GM12878 (cell line): ENCODE measurements at regions of chr17 and their contacts with region 1.

Region 1: GRCh38 chr17:42388381-42389134 is at the start of gene STAT3:
- DNase-seq: peak; percentile 100
- ATAC-seq: peak; percentile 95
- H3K4me3 ChIP-seq: peak within 1 kb of the TSS; percentile 91
- H3K27ac ChIP-seq: peak within 1 kb of the TSS; percentile 97
- H3K4me1 ChIP-seq: peaks cover 17% of the 10 kb centered on the region
- H3K27me3 ChIP-seq: no peaks in the 10 kb centered on the region
- CTCF ChIP-seq: 0 out of 6 replicates have a peak, but pooled peaks of 1 of the 3 experiments have one; percentile 3
- EP300 ChIP-seq: peak; percentile 89 to 100
- POLR2A ChIP-seq: peak; percentile 92
- RAD21 ChIP-seq: peak; percentile 21; the same call in 1 of the 2 replicates
- polyA plus RNA-seq, gene STAT3: 18.4 to 18.9 TPM

Region 2: GRCh38 chr17:42337442-42337841 is 51.1 kb before region 1 on chr17:
- CTCF ChIA-PET with region 1: interaction called, 14 read pairs
- POLR2A ChIA-PET with region 1: interaction called, 29 read pairs
- RAD21 ChIA-PET with region 1: interaction called, 21 read pairs
- SMC1A ChIA-PET with region 1: interaction called, 32 read pairs
- in situ Hi-C with region 1: no loop called
- intact Hi-C with region 1: loop called (anchors 5 kb)
- DNase-seq: peak; percentile 94
- ATAC-seq: peak; percentile 78
- H3K4me3 ChIP-seq: no peak overlapping the region
- H3K27ac ChIP-seq: peak overlapping the region; percentile 73
- H3K4me1 ChIP-seq: peaks cover 64% of the 10 kb centered on the region
- H3K27me3 ChIP-seq: no peaks in the 10 kb centered on the region
- CTCF ChIP-seq: no peak
- EP300 ChIP-seq: peak; percentile 70 to 85
- POLR2A ChIP-seq: 0 out of 2 replicates have a peak, but pooled peaks have one; percentile 17
- RAD21 ChIP-seq: no peak

Region 3: GRCh38 chr17:42358434-42358833 is 30.1 kb before region 1 on chr17:
- CTCF ChIA-PET with region 1: interaction called, 4 read pairs
- POLR2A ChIA-PET with region 1: interaction called, 5 read pairs
- RAD21 ChIA-PET with region 1: interaction called, 5 read pairs
- SMC1A ChIA-PET with region 1: interaction called, 14 read pairs
- in situ Hi-C with region 1: no loop called
- intact Hi-C with region 1: no loop called
- DNase-seq: no peak
- ATAC-seq: peak; percentile 28
- H3K4me3 ChIP-seq: peak overlapping the region; percentile 31; the same call in 1 of the 2 replicates
- H3K27ac ChIP-seq: peak overlapping the region; percentile 54
- H3K4me1 ChIP-seq: peaks cover 38% of the 10 kb centered on the region
- H3K27me3 ChIP-seq: no peaks in the 10 kb centered on the region
- CTCF ChIP-seq: no peak
- EP300 ChIP-seq: no peak
- POLR2A ChIP-seq: no peak
- RAD21 ChIP-seq: no peak

Region 4: DNA sequence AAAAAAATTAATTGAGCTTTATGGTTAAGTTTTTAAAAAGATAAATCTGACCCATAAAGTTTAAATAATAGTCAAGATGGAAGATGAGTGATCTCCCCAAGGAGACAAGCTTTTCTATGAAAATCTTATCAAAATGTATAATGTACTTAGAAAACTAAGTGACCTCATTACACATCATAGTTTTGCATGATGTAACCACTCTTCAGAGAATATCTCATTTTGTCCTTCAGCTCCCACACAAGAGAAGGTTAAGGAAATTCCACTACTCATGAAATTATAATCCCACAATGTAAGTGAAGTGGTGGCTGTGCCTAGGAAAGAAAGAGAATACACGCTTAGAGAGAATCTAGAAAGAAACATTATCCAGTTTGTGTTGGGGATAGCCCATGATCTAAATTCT is 14.7 kb before region 1 on chr17:
- CTCF ChIA-PET with region 1: interaction called, 3 read pairs
- POLR2A ChIA-PET with region 1: interaction called, 22 read pairs
- RAD21 ChIA-PET with region 1: interaction called, 23 read pairs
- SMC1A ChIA-PET with region 1: interaction called, 22 read pairs
- in situ Hi-C with region 1: no loop called
- intact Hi-C with region 1: no loop called
- DNase-seq: no peak
- ATAC-seq: no peak
- H3K4me3 ChIP-seq: peak overlapping the region; percentile 45; the same call in 1 of the 2 replicates
- H3K27ac ChIP-seq: peak overlapping the region; percentile 2; the same call in 1 of the 2 replicates
- H3K4me1 ChIP-seq: peaks cover 25% of the 10 kb centered on the region
- H3K27me3 ChIP-seq: no peaks in the 10 kb centered on the region
- CTCF ChIP-seq: no peak
- EP300 ChIP-seq: no peak
- POLR2A ChIP-seq: no peak
- RAD21 ChIP-seq: no peak

Region 5: GRCh38 chr17:42399948-42400843 is 11.6 kb after region 1 on chr17:
- CTCF ChIA-PET with region 1: interaction called, 36 read pairs
- POLR2A ChIA-PET with region 1: interaction called, 4 read pairs
- RAD21 ChIA-PET with region 1: interaction called, 23 read pairs
- SMC1A ChIA-PET with region 1: interaction called, 32 read pairs
- in situ Hi-C with region 1: no loop called
- intact Hi-C with region 1: no loop called
- DNase-seq: no peak
- ATAC-seq: no peak
- H3K4me3 ChIP-seq: no peak overlapping the region
- H3K27ac ChIP-seq: no peak overlapping the region
- H3K4me1 ChIP-seq: no peaks in the 10 kb centered on the region
- H3K27me3 ChIP-seq: no peaks in the 10 kb centered on the region
- CTCF ChIP-seq: no peak
- EP300 ChIP-seq: no peak
- POLR2A ChIP-seq: no peak
- RAD21 ChIP-seq: no peak

Region 6: DNA sequence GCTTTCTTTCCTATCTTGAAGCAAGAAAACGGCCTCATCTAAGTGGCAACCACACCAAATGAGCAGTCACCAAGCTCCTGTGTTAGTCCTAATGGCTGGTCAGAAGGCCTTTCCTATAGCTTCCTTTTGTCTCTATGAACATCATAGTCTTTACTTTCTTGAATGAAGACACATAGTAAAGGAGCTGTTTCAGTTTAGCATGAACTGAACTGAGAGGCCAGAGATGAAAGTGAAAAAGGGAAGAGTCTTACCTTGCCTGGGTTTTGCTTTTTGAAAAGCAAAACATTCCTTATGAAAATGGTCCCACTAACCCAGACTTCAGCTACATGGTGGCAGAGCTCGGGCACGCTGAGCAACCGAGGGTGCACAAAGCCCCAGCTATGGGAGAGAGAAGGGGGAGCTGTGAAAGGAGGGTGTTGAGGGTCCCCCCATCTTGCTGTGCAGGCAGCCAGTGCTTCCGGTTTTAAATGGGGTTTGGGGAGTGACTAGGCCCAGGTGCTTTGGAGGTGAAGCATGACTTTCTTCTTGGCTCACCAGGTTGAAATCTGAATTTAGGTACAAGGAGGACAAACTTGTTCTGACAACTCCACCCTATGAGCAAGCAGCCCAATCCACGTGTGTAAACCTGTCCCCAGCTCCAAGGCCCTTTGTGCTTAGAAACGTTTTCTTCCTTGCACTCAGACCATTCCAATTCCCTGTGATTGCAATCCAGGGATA is 198.1 kb after region 1 on chr17:
- CTCF ChIA-PET with region 1: no interaction called
- POLR2A ChIA-PET with region 1: no interaction called
- RAD21 ChIA-PET with region 1: no interaction called
- SMC1A ChIA-PET with region 1: no interaction called
- in situ Hi-C with region 1: no loop called
- intact Hi-C with region 1: no loop called
- DNase-seq: no peak
- ATAC-seq: peak; percentile 94
- H3K4me3 ChIP-seq: peak overlapping the region; percentile 41; the same call in 1 of the 2 replicates
- H3K27ac ChIP-seq: peak overlapping the region; percentile 60
- H3K4me1 ChIP-seq: peaks cover 32% of the 10 kb centered on the region
- H3K27me3 ChIP-seq: no peaks in the 10 kb centered on the region
- CTCF ChIP-seq: no peak
- EP300 ChIP-seq: no peak
- POLR2A ChIP-seq: peak; percentile 39; the same call in 1 of the 2 replicates
- RAD21 ChIP-seq: no peak